Endothelial cell of umbilical vein (primary cell): ENCODE measurements at regions of chr3 and their contacts with region 1.

Region 1: GRCh38 chr3:158649791-158650190 is 5.5 kb downstream of the GFM1 start:
- DNase-seq: peak; percentile 93
- H3K4me3 ChIP-seq: no peak overlapping the region
- H3K27ac ChIP-seq: peak overlapping the region; percentile 95
- H3K4me1 ChIP-seq: peaks cover 31% of the 10 kb centered on the region
- H3K27me3 ChIP-seq: no peaks in the 10 kb centered on the region
- CTCF ChIP-seq: no peak
- POLR2A ChIP-seq: peak; percentile 57

Region 2: DNA sequence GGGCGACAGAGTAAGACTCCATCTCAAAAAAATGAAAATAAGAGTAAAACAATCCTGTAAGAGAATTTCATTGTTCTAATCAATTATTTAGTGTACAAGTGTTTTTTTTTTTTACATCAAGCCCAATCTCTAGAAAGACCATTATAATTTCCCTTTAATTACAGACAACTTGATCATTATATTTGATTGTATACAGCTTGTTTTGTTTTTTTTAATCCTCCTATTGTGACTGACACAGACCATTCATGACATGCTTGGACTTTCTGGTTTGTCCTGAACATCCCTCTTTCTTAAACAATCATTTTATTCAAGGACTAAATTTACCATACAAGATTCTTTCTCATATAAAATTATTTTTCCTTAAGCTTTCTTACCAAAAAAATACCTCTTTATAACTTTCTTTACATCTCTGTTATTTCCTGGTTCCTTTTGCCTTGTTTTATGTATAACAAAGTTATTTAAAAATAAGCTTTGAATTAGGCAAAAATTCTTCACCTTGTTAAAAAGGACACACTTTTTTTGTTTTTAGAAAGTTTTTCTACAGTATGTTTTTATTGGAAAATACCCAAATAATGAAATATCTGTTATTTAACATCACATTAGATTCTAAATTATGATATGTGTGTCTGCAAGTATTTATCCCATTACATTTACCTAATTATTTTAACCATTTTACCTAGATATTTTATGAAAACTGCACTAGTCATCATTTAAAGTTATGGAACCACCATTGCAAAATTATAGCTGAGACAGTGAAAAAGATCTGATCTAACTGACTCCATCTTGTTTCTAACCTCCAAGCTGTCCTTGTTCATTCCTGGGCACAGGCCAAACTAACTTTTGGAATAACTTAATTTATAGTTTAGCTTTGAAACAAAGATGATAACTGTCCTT is 31.6 kb before region 1 on chr3:
- CTCF ChIA-PET with region 1: no interaction called
- POLR2A ChIA-PET with region 1: no interaction called
- dilution Hi-C with region 1: no loop called
- intact Hi-C with region 1: no loop called
- DNase-seq: no peak
- H3K4me3 ChIP-seq: no peak overlapping the region
- H3K27ac ChIP-seq: no peak overlapping the region
- H3K4me1 ChIP-seq: no peaks in the 10 kb centered on the region
- H3K27me3 ChIP-seq: no peaks in the 10 kb centered on the region
- CTCF ChIP-seq: no peak
- POLR2A ChIP-seq: no peak

Region 3: DNA sequence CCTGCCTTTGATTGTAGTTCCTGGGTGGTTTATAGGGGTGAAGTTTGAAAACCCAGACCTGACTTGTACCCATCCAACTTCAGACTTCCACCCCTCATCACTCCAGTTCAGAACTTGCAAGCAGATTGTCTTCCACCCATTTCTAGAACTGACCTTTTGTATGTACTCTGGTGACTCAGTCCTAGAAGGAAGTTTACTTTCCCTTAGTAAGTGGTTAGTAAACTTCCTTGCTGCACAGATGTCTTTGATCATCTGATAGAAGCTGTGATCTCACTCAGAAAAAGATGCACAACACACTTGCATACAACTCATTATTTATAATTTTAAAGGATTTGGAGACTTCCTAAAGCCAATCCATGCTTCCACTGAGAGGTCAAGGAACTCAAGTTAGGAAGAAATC is 520.0 kb after region 1 on chr3:
- CTCF ChIA-PET with region 1: no interaction called
- POLR2A ChIA-PET with region 1: interaction called, 7 read pairs
- dilution Hi-C with region 1: no loop called
- intact Hi-C with region 1: loop called (anchors 5 kb)
- DNase-seq: peak; percentile 82
- H3K4me3 ChIP-seq: no peak overlapping the region
- H3K27ac ChIP-seq: peak overlapping the region; percentile 87
- H3K4me1 ChIP-seq: peaks cover 32% of the 10 kb centered on the region
- H3K27me3 ChIP-seq: no peaks in the 10 kb centered on the region
- CTCF ChIP-seq: no peak
- POLR2A ChIP-seq: peak; percentile 71